Activated CD4-positive, alpha-beta T cell treated with anti-CD3 and anti-CD28 coated beads for 36 hours (primary cell): ENCODE measurements at regions of chr18 and their contacts with region 1.

Region 1: GRCh38 chr18:21897811-21898210 is 157.2 kb downstream of the MIB1 start:
- DNase-seq: peak; percentile 36
- ATAC-seq: no peak
- H3K4me3 Mint-ChIP-seq: no peak overlapping the region
- H3K27ac Mint-ChIP-seq: no peak overlapping the region
- H3K4me1 Mint-ChIP-seq: peaks cover 4% of the 10 kb centered on the region
- H3K27me3 Mint-ChIP-seq: peaks cover 13% of the 10 kb centered on the region

Region 2: DNA sequence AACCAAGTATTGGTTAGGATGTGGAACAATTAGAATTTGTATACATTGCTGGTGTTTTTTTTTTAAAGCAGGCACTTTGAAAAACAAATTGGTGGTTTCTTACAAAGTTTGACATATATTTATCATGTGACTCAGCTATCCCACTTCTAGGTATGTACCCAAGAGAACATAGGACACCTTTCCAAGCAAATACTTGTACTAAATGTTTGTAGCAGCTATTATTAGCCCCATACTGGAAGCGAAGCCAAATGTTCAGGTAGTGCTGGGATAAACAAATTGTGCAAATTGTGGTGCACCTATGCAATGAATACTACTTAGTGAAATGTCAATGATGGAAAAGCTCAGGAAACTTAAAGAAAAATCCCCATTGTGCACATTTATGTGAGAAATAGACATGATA is 56.2 kb before region 1 on chr18:
- CTCF ChIA-PET with region 1: no interaction called
- POLR2A ChIA-PET with region 1: no interaction called
- intact Hi-C with region 1: loop called in 1 of 2 experiments (anchors 5 kb)
- DNase-seq: no peak
- ATAC-seq: no peak
- H3K4me3 Mint-ChIP-seq: no peak overlapping the region
- H3K27ac Mint-ChIP-seq: no peak overlapping the region
- H3K4me1 Mint-ChIP-seq: no peaks in the 10 kb centered on the region
- H3K27me3 Mint-ChIP-seq: no peaks in the 10 kb centered on the region

Region 3: GRCh38 chr18:21955757-21956652 is 58.2 kb after region 1 on chr18:
- CTCF ChIA-PET with region 1: interaction called, 5 read pairs
- POLR2A ChIA-PET with region 1: no interaction called
- intact Hi-C with region 1: loop called (anchors 1 kb)
- DNase-seq: peak; percentile 88
- ATAC-seq: peak; percentile 84
- H3K4me3 Mint-ChIP-seq: no peak overlapping the region
- H3K27ac Mint-ChIP-seq: no peak overlapping the region
- H3K4me1 Mint-ChIP-seq: no peaks in the 10 kb centered on the region
- H3K27me3 Mint-ChIP-seq: peaks cover 8% of the 10 kb centered on the region

Region 4: DNA sequence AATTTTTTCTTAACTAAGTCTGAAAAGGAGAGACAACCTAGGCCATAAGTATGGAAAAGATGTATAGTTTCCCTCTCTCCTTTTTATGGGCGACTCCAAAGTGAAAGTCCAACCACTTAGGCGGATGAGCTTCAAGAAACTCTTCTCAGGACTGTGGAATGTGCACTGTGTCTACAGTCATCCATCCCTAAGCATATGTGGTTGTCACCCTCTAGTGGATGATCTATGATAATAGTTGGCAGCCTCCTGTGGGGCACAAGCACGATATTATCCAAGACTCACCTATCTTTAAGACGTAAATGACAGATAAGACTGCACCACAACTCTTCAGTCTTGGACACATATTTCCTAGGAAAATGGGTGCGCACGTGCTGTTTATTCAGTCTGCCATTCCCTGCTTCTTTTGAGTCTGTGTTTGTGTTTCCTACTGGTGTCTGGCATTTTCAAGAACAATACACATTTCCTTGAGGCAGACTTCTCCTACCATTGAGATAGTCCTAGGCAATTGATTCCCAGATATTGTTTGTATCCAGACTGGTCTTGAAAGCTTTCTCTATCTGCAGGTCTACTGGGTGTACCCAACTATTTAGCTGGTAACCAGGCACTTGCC is 665.4 kb after region 1 on chr18:
- CTCF ChIA-PET with region 1: no interaction called
- POLR2A ChIA-PET with region 1: no interaction called
- intact Hi-C with region 1: loop called in 1 of 2 experiments (anchors 1 kb)
- DNase-seq: peak; percentile 9
- ATAC-seq: peak; percentile 55
- H3K4me3 Mint-ChIP-seq: no peak overlapping the region
- H3K27ac Mint-ChIP-seq: no peak overlapping the region
- H3K4me1 Mint-ChIP-seq: peaks cover 5% of the 10 kb centered on the region
- H3K27me3 Mint-ChIP-seq: peaks cover 29% of the 10 kb centered on the region

Region 5: GRCh38 chr18:22703883-22704585 is 806.2 kb after region 1 on chr18:
- CTCF ChIA-PET with region 1: no interaction called
- POLR2A ChIA-PET with region 1: no interaction called
- intact Hi-C with region 1: loop called in 1 of 2 experiments (anchors 10 kb)
- DNase-seq: peak; percentile 6
- ATAC-seq: no peak
- H3K4me3 Mint-ChIP-seq: no peak overlapping the region
- H3K27ac Mint-ChIP-seq: no peak overlapping the region
- H3K4me1 Mint-ChIP-seq: no peaks in the 10 kb centered on the region
- H3K27me3 Mint-ChIP-seq: peaks cover 8% of the 10 kb centered on the region